ENCODE measurements at regions of chrX and their contacts with region 1.

Region 1: GRCh38 chrX:24838629-24839028 is 144.9 kb downstream of the POLA1 start:
- DNase-seq: no peak
- H3K4me3 ChIP-seq: no peak overlapping the region
- H3K27ac ChIP-seq: no peak overlapping the region
- H3K4me1 ChIP-seq: no peaks in the 10 kb centered on the region
- H3K27me3 ChIP-seq: no peaks in the 10 kb centered on the region
- CTCF ChIP-seq: peak in 5 of 6 experiments; percentile 15 to 65 (median 32)
- POLR2A ChIP-seq: no peak

Region 2: DNA sequence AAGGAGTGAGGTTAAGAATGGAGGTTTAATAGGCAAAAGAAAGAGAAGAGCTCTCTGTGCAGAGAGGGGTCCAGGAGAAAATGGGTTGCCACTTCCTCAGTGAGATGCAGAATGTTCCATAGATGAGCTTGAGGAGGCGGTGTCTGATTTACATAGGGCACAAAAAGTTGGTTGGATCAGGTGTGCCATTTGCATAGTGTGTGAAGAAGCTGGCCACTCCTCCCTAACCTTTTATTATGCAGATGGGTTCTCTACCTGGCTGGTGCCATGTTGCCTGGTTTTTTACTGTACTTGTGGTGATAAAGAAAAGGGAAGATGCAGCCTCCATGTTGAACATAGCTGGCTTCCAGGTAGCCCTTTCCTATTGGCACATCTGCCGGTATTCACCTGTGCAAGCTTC is 450.9 kb before region 1 on chrX:
- intact Hi-C with region 1: no loop called
- DNase-seq: no peak
- H3K4me3 ChIP-seq: no peak overlapping the region
- H3K27ac ChIP-seq: no peak overlapping the region
- H3K4me1 ChIP-seq: no peaks in the 10 kb centered on the region
- H3K27me3 ChIP-seq: no peaks in the 10 kb centered on the region
- CTCF ChIP-seq: no peak
- POLR2A ChIP-seq: no peak

Region 3: DNA sequence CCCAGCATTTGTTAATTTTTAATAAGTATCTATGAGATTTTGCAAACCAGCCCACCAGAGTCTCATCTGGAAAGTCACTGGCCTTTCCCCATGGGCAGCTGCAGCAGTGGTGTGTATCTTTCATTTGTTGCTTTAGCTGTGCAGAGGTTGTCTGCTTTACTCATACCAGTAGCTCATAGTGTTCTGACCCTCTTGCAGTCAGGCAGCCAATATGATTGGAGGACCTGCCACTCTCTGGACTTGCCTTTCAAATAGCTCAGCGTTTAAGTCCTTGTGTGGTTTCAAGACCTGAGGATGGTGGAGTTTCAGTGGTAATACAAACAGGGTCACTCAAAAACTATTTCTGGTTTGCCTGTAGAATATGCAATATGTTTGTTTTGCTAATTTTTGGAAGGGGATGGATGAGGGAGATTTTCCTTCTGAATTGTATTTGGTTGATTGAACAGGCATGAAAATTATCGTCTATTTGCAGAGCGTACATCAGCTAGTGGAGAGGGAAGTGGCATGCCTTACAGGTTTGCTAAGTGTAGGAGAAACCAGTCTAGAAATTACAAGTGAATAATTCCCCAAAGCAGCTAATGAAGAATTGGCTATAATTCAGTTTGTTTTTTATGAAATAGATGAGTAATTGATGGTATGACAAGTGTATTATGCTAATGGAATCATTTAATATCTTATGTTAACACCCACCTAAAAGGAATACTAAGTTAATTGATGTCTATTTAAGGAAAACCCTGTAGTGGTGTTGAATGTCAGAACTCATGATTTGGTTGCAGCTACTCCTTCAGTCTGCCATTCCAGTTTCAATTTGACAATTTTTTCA is 136.1 kb before region 1 on chrX:
- intact Hi-C with region 1: no loop called
- DNase-seq: no peak
- H3K4me3 ChIP-seq: no peak overlapping the region
- H3K27ac ChIP-seq: no peak overlapping the region
- H3K4me1 ChIP-seq: no peaks in the 10 kb centered on the region
- H3K27me3 ChIP-seq: no peaks in the 10 kb centered on the region
- CTCF ChIP-seq: no peak
- POLR2A ChIP-seq: no peak

Region 4: GRCh38 chrX:24720036-24720435 is 118.6 kb before region 1 on chrX:
- intact Hi-C with region 1: no loop called
- DNase-seq: no peak
- H3K4me3 ChIP-seq: no peak overlapping the region
- H3K27ac ChIP-seq: no peak overlapping the region
- H3K4me1 ChIP-seq: no peaks in the 10 kb centered on the region
- H3K27me3 ChIP-seq: no peaks in the 10 kb centered on the region
- CTCF ChIP-seq: no peak
- POLR2A ChIP-seq: no peak

Region 5: DNA sequence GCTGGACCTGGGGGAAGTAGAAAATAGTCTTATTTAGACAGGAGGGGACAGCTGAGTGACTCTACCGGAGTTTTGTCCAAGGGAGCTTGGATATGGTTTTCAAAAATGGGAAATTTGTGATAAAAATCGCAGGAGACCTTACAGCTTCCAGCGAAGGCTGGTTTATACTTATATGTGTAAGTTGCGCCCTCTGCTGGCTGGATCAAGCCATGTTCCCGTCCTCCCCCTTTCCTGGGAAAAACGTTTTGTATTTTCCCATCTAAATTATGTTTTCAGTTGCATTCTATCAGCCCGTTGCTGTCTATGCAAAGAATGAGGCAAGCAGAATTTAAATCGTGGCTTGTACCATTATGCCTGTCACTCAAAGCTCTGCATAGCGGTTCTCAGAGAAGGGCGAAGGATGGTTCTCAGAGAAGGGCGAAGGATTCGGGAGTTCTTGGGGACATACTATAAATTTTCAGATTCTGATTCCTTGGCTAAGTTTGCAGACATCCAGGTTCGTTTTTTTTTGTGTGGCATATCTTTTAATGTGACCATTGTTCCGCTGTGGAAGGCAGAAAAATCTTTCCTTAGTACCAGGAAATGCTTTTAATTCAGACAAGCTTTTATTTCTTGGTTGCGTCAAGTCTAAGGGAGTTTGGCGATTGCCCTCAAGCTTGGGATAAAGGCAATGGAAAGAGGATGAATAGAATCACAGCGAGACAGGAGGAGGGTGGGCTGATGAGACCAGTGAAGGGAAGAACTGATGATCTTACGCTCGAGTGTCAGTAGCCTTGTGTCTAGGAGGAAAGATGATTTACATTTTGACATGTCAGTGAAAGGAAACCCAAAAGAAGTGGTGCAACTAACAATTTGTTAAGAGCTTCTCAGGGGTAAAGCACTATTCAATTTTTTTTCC is 305.7 kb after region 1 on chrX:
- intact Hi-C with region 1: loop called (anchors 10 kb)
- DNase-seq: no peak
- H3K4me3 ChIP-seq: no peak overlapping the region
- H3K27ac ChIP-seq: no peak overlapping the region
- H3K4me1 ChIP-seq: no peaks in the 10 kb centered on the region
- H3K27me3 ChIP-seq: peaks cover 0 to 8% (median 0%) of the 10 kb centered on the region in 4 donors
- CTCF ChIP-seq: peak; percentile 47 to 66 (median 63)
- POLR2A ChIP-seq: no peak